ENCODE measurements at regions of chr18 and their contacts with region 1.

Region 1: GRCh38 chr18:47100214-47100831 is 50.0 kb downstream of the HDHD2 start:
- DNase-seq: peak; percentile 63
- H3K4me3 ChIP-seq: no peak overlapping the region
- H3K27ac ChIP-seq: no peak overlapping the region
- H3K4me1 ChIP-seq: no peaks in the 10 kb centered on the region
- H3K27me3 ChIP-seq: no peaks in the 10 kb centered on the region
- CTCF ChIP-seq: peak; percentile 32 to 66 (median 46)
- EP300 ChIP-seq: no peak
- POLR2A ChIP-seq: no peak

Region 2: DNA sequence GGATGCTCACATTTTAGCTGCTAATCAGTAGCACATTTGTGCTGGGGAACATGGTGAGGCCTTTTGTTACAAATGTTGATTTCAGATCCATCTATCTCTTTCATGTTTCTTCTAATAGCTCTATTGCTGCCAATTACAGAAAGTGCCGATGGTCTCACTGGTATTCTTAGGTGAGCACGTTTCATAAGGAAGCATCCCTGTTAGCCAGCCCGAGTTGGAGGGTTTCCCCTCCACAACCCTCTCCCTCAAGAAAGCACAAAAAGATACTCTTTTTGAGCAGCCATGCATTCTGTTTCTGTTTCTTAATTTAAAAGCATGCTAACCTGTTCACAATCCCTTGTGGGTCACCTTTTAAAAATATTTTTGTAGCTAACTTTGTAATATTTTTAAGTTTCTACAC is 312.6 kb before region 1 on chr18:
- intact Hi-C with region 1: no loop called
- DNase-seq: no peak
- H3K4me3 ChIP-seq: no peak overlapping the region
- H3K27ac ChIP-seq: no peak overlapping the region
- H3K4me1 ChIP-seq: no peaks in the 10 kb centered on the region
- H3K27me3 ChIP-seq: no peaks in the 10 kb centered on the region
- CTCF ChIP-seq: no peak
- EP300 ChIP-seq: no peak
- POLR2A ChIP-seq: no peak

Region 3: DNA sequence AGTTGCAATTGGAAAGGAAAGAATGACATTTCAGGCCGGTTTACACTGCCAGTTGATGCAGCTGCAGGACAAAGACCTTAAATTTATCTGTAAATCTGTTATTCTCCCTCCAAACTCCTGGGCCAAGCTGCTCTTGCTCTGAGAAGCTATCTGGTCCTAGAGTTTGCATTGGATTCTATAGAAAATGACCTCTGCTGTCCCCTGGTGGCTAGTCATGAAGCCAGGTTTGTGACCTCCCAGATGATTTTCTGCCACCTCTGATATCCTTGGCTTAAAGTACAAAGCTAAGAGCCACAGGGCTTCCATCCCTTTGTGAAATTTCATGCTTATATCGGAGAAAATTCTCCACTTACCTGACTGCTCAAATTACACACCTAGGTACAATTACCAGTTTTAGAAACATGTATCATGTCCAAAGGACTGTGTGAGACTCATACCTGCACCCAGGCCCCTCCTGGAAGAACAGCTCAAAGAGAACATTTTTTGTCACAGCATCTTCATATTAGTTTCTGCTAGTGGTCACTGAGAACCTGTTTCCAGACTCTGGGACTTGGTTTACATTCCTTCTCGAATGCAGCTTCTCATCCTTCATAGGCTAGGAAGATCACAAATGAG is 104.7 kb after region 1 on chr18:
- intact Hi-C with region 1: loop called (anchors 2 kb)
- DNase-seq: no peak
- H3K4me3 ChIP-seq: no peak overlapping the region
- H3K27ac ChIP-seq: no peak overlapping the region
- H3K4me1 ChIP-seq: no peaks in the 10 kb centered on the region
- H3K27me3 ChIP-seq: peaks cover 0 to 3% (median 0%) of the 10 kb centered on the region in 3 donors
- CTCF ChIP-seq: peak; percentile 23 to 73 (median 54)
- EP300 ChIP-seq: no peak
- POLR2A ChIP-seq: no peak

Region 4: GRCh38 chr18:47748847-47749599 is 648.7 kb after region 1 on chr18:
- intact Hi-C with region 1: loop called (anchors 5 kb)
- DNase-seq: peak; percentile 77
- H3K4me3 ChIP-seq: peak overlapping the region; percentile 14 to 43 (median 32)
- H3K27ac ChIP-seq: no peak overlapping the region
- H3K4me1 ChIP-seq: peaks cover 0 to 7% (median 4%) of the 10 kb centered on the region in 4 donors
- H3K27me3 ChIP-seq: peaks cover 0 to under 1% (median 0%) of the 10 kb centered on the region in 3 donors
- CTCF ChIP-seq: peak; percentile 63 to 100 (median 84)
- EP300 ChIP-seq: no peak
- POLR2A ChIP-seq: no peak

Measured in sigmoid colon (tissue), 7 donors.